Mucosa of descending colon (tissue), 3 donors: ENCODE measurements at regions of chr16 and their contacts with region 1.

Region 1: GRCh38 chr16:25051406-25052150 is 36.4 kb upstream of the ARHGAP17 start:
- DNase-seq: no peak
- ATAC-seq: no peak
- H3K4me3 ChIP-seq: no peak overlapping the region
- H3K4me1 ChIP-seq: peaks cover 10% of the 10 kb centered on the region
- CTCF ChIP-seq: no peak

Region 2: GRCh38 chr16:24975428-24975889 is 76.1 kb before region 1 on chr16:
- intact Hi-C with region 1: no loop called
- DNase-seq: no peak
- ATAC-seq: peak; percentile 33
- H3K4me3 ChIP-seq: no peak overlapping the region
- H3K4me1 ChIP-seq: no peaks in the 10 kb centered on the region
- CTCF ChIP-seq: no peak

Region 3: DNA sequence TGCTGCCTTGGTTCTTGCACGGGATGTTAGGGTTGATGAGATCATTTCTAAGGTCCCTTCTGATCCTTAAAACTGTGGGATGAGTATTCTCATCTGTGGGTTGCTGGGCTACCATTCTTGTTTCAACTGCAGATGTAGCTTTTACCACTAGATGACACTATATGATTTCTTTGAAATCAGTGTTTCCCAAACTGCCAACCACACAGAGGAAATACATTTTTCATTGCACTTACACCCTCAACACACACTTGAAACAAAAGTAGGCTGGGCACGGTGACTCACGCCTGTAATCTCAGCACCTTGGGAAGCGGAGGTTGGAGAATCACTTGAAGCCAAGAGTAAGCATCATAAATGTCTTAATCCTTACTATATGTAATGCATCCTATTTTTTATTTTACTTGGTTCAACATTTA is 75.2 kb after region 1 on chr16:
- intact Hi-C with region 1: loop called in 1 of 2 experiments (anchors 5 kb)
- DNase-seq: peak; percentile 63 to 75 (median 72)
- ATAC-seq: peak; percentile 96
- H3K4me3 ChIP-seq: no peak overlapping the region
- H3K4me1 ChIP-seq: peaks cover 6% of the 10 kb centered on the region
- CTCF ChIP-seq: peak; percentile 27

Region 4: DNA sequence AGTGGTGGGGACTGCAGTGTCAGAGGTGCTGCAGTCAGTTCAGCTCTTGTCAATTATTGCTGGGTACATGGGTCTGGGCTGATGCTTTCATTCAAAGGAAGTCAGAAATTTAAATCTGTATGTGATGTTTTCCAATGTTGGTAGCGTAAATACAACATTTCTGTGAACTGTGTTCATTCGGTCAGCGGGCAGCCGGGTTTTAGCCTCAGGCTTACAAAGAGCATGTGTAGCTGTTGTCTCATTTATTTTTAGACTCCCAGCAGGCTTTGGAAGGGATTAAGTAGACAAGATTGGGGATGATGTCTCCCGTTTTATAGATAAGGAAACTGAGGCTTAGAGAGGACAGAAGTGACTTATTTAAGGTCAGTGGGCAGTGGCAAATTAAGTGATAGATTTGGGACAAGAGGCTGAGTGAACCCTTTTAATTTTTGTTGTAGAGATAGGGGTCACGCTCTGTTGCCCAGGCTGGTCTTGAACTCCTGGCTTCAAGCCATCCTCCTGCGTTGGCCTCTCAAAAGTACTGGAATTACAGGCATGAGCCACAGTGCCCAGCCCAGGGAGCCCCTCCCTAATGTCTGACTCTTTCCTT is 173.2 kb after region 1 on chr16:
- intact Hi-C with region 1: loop called (anchors 10 kb)
- DNase-seq: no peak
- ATAC-seq: no peak
- H3K4me3 ChIP-seq: no peak overlapping the region
- H3K4me1 ChIP-seq: peaks cover 5% of the 10 kb centered on the region
- CTCF ChIP-seq: no peak

Region 5: DNA sequence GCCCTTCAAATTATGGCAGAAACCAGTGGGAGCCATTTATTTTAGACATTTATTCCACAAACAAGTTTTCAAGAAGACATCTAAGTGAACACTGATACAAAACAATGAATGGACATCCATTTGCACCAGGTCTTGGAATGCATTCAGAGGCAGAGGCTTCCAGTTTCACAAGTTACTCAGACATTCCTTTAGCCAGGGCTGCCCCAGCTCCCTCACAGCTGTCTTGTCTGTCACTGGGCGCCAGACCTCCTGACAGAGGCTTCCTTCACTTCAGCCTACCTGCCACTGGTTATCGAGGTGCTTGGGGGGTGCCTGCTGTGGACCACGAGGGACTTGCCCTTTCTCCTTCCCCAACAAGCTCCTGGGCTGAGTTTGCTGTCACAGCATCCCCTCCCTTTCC is 184.4 kb after region 1 on chr16:
- intact Hi-C with region 1: loop called in 1 of 2 experiments (anchors 10 kb)
- DNase-seq: no peak
- ATAC-seq: no peak
- H3K4me3 ChIP-seq: no peak overlapping the region
- H3K4me1 ChIP-seq: no peaks in the 10 kb centered on the region
- CTCF ChIP-seq: no peak